Right cardiac atrium (tissue), 5 donors: ENCODE measurements at regions of chr12 and their contacts with region 1.

Region 1: DNA sequence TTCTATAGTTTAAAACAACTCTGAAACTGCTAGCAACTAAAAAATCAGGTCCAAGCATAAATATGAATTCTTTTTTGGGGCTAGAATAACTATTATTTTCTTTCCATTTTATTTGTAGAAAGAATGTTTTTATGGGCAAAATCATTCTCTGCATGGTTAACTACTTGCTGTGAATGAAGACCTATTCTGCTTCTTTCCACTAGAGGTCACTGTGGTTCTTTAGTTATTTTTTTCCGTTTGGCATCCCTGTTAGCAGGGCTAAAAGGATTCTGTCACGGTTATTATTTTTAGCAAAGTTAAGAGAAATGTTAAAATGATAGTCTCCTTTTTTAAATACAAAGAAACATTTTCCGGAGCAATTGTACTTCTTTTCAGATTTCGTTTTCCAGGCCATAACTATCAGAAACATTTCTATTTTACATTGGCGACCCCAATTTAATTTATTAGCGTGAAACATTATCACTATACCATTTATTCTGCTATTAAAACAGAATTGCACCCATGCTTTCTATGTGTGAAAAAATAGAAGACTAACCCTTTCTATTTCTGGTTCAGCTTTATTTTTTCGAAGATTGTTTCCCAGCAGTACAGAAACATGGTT is 404.8 kb downstream of the ATP23 start:
- DNase-seq: no peak
- ATAC-seq: peak in 1 of 2 donors; percentile 71
- H3K4me3 ChIP-seq: no peak overlapping the region
- H3K27ac ChIP-seq: no peak overlapping the region
- H3K4me1 ChIP-seq: no peaks in the 10 kb centered on the region
- H3K27me3 ChIP-seq: no peaks in the 10 kb centered on the region

Region 2: DNA sequence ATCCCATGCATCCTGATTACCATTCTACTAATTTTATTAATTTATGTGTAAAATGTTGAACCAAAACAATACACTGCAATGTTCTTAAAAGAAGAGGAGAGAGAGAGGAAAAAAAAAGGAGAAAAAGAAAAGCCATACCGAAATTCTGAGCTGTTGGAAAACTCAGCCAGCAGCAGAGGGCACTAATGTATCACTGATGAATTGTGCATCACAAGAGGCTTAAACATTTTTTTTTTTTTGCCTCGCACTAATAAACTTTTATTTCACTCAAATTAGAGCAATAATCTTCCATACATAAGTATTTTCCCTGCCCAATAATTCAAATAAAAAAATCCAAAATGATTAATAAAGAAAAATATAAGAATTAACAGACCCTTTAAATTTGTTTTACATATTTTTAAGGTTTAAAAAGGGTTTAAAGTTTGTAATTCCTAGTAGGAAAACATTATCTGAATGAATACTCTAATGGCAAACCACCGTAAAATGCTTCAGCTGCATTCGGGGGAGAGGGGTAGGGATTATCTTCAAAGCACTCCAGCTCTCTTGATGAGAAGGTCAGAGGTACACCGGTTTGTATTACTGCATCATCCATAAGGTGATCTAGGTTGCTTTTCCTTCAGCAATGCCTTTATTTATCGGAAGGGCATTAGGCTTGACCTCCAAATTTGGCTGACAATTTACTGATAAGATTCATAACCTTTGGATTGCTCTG is 362.8 kb before region 1 on chr12:
- intact Hi-C with region 1: loop called in 1 of 4 experiments (anchors 10 kb)
- DNase-seq: peak in 1 of 3 donors; percentile 45
- ATAC-seq: no peak
- H3K4me3 ChIP-seq: no peak overlapping the region
- H3K27ac ChIP-seq: no peak overlapping the region
- H3K4me1 ChIP-seq: no peaks in the 10 kb centered on the region
- H3K27me3 ChIP-seq: no peaks in the 10 kb centered on the region

Region 3: DNA sequence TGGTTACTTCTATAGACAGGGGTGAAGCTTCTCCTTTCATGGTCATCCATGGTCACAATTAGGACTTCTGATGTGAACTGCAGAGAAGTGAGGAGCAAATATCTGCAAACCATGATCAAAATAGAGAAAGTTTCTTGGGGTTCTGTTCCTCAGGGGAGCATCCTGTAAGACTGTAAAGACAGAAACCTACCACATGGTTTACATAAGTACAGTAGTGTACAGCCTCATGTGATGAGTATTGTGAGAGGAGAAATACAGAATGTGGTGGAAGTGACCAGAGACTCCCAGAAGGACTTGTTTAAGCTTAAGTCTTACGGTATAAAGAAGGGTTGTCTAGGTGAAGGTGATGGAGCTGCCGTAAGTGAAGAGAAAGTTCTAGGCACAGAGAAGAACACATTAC is 89.5 kb after region 1 on chr12:
- intact Hi-C with region 1: loop called in 1 of 4 experiments (anchors 10 kb)
- DNase-seq: no peak
- ATAC-seq: no peak
- H3K4me3 ChIP-seq: no peak overlapping the region
- H3K27ac ChIP-seq: no peak overlapping the region
- H3K4me1 ChIP-seq: no peaks in the 10 kb centered on the region
- H3K27me3 ChIP-seq: no peaks in the 10 kb centered on the region

Region 4: DNA sequence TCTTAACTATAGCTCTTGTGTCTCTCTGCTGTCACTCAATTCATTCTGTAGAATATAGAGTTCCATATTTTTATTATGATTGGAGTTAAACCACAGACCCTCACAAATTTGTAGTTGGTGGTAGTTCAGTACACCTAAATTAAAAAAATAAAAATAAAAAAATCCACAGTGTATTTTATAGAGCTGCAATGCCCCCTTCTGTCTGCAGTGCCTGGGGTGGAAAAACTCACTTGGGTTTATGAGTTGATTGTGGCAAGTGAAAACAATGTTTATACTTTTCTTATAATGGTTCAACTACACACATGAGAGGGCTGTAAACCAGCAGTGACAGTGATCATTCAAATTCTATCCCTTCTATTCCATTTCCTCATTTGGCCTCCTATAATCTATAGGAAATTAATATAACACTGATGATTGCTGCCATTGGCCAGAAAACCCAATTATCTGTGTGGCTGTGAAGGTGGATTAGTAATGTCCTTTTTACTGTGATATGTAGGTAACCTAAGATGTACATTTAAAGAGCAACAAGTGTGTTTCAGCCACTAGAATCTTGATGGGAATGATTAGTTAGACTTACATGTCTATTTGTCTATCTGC is 741.0 kb after region 1 on chr12:
- intact Hi-C with region 1: loop called in 1 of 4 experiments (anchors 5 kb)
- DNase-seq: no peak
- ATAC-seq: peak in 1 of 2 donors; percentile 44
- H3K4me3 ChIP-seq: no peak overlapping the region
- H3K27ac ChIP-seq: no peak overlapping the region
- H3K4me1 ChIP-seq: no peaks in the 10 kb centered on the region
- H3K27me3 ChIP-seq: no peaks in the 10 kb centered on the region

Region 5: GRCh38 chr12:59164991-59165718 is 819.0 kb after region 1 on chr12:
- intact Hi-C with region 1: loop called in 1 of 4 experiments (anchors 10 kb)
- DNase-seq: no peak
- ATAC-seq: no peak
- H3K4me3 ChIP-seq: no peak overlapping the region
- H3K27ac ChIP-seq: no peak overlapping the region
- H3K4me1 ChIP-seq: no peaks in the 10 kb centered on the region
- H3K27me3 ChIP-seq: no peaks in the 10 kb centered on the region